IMR-90 (cell line): ENCODE measurements at regions of chr6 and their contacts with region 1.

Region 1: GRCh38 chr6:105179244-105180065 is at the start of gene POPDC3:
- DNase-seq: peak; percentile 53
- ATAC-seq: peak; percentile 71
- H3K4me3 ChIP-seq: peak within 1 kb of the TSS; percentile 63
- H3K27ac ChIP-seq: peak within 1 kb of the TSS; percentile 80
- H3K4me1 ChIP-seq: peaks cover 2% of the 10 kb centered on the region; the same call in 1 of the 2 replicates
- H3K27me3 ChIP-seq: no peaks in the 10 kb centered on the region
- CTCF ChIP-seq: no peak
- POLR2A ChIP-seq: peak; percentile 13; the same call in 1 of the 2 replicates
- RAD21 ChIP-seq: no peak
- total RNA-seq, gene POPDC3: 25.8 and 29.4 TPM in 2 replicates

Region 2: DNA sequence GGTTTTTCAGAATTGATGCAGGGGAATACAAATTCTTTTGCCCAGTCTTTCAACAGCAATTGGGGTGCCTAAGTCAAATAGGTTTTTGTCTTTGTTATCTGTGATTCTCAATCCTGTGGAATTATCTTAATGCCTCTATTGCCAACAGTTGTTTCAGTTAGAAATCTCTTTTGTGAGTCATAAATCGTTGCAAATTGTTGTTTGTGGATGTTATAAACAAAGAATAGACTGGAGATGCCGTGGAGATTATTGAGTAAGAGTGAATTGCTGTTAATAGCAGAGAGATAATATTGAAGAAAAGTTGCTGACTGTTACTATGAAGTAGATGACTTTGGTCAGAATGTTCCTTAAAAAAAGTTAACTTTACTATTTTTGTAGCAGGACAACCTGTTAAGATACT is 64.0 kb after region 1 on chr6:
- CTCF ChIA-PET with region 1: no interaction called
- POLR2A ChIA-PET with region 1: no interaction called
- dilution Hi-C with region 1: no loop called
- in situ Hi-C with region 1: no loop called
- intact Hi-C with region 1: loop called (anchors 5 kb)
- DNase-seq: peak; percentile 50
- ATAC-seq: peak; percentile 68
- H3K4me3 ChIP-seq: no peak overlapping the region
- H3K27ac ChIP-seq: no peak overlapping the region
- H3K4me1 ChIP-seq: peaks cover 4% of the 10 kb centered on the region
- H3K27me3 ChIP-seq: peaks cover 2% of the 10 kb centered on the region; the same call in 1 of the 2 replicates
- CTCF ChIP-seq: no peak
- POLR2A ChIP-seq: no peak
- RAD21 ChIP-seq: no peak